Caco-2 (cell line): ENCODE measurements at regions of chr1 and their contacts with region 1.

Region 1: DNA sequence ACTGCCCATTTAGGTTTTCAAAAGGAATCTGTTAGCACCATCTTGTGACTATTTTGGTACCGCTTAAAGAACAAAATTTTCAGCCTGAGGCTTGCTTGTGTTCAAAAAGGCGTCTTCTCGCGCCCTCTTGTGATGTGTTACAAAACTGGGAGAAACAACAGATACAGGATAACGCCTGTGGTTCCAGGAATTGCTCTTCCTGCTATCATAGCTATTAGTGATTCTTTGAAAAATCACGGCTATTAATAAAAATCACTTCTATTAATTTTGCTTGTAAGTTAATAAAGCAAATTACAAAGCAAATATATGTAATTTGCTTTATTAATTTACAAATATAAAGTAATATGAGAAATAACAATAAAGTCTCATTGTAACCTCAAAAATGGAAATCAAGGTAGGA is 82.2 kb upstream of the ABCD3 start:
- DNase-seq: peak; percentile 74 to 79
- H3K4me3 ChIP-seq: no peak overlapping the region
- H3K4me3 Mint-ChIP-seq: no peak overlapping the region
- H3K27ac Mint-ChIP-seq: no peak overlapping the region
- H3K4me1 ChIP-seq: peaks cover 65% of the 10 kb centered on the region
- H3K4me1 Mint-ChIP-seq: peaks cover 25% of the 10 kb centered on the region
- H3K27me3 ChIP-seq: no peaks in the 10 kb centered on the region
- H3K27me3 Mint-ChIP-seq: no peaks in the 10 kb centered on the region
- CTCF ChIP-seq: peak; percentile 57 to 68

Region 2: GRCh38 chr1:94025383-94026340 is 310.3 kb before region 1 on chr1:
- CTCF ChIA-PET with region 1: interaction called, 36 read pairs
- POLR2A ChIA-PET with region 1: no interaction called
- intact Hi-C with region 1: loop called (anchors 1 kb)
- DNase-seq: peak in 1 of 2 experiments; percentile 45
- H3K4me3 ChIP-seq: no peak overlapping the region
- H3K4me3 Mint-ChIP-seq: no peak overlapping the region
- H3K27ac Mint-ChIP-seq: peak overlapping the region; percentile 43
- H3K4me1 ChIP-seq: peaks cover 23% of the 10 kb centered on the region
- H3K4me1 Mint-ChIP-seq: peaks cover 22% of the 10 kb centered on the region
- H3K27me3 ChIP-seq: no peaks in the 10 kb centered on the region
- H3K27me3 Mint-ChIP-seq: no peaks in the 10 kb centered on the region
- CTCF ChIP-seq: peak; percentile 43 to 51

Region 3: DNA sequence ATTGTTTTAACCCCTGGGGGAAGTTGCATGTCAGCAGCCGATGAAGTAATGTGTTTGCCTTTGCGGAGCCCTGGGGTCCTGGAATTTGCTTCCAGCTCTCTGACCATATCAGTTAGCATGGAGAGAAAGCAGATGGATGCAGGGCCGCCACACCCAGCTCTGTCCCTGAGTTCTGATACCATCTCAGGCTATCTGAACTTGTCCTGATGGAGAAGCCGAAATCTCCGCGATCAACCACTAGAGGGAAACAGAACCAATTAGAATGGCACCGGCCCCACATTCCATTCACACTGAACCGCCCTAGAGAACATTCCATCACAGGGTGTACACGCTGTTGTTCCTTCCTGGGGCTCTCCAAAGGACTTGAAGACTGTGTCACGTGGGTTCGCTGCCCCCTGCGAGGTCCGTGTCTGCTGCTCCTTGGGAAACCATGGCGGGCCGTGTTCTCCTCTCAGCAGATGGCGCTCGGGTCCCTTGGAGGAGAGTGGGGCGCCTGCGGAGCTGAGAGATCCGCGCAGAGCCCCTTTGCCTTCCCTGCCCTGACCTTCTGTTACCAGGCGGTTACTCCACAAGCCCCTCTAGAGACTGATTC is 290.4 kb before region 1 on chr1:
- CTCF ChIA-PET with region 1: interaction called, 49 read pairs
- POLR2A ChIA-PET with region 1: no interaction called
- intact Hi-C with region 1: loop called (anchors 1 kb)
- DNase-seq: peak; percentile 91 to 95
- H3K4me3 ChIP-seq: peak overlapping the region; percentile 12
- H3K4me3 Mint-ChIP-seq: peak overlapping the region; percentile 24
- H3K27ac Mint-ChIP-seq: peak overlapping the region; percentile 68
- H3K4me1 ChIP-seq: peaks cover 9% of the 10 kb centered on the region; the same call in 1 of the 2 replicates
- H3K4me1 Mint-ChIP-seq: peaks cover 7% of the 10 kb centered on the region
- H3K27me3 ChIP-seq: no peaks in the 10 kb centered on the region
- H3K27me3 Mint-ChIP-seq: no peaks in the 10 kb centered on the region
- CTCF ChIP-seq: peak; percentile 40 to 73

Region 4: GRCh38 chr1:94125551-94126514 is 210.1 kb before region 1 on chr1:
- CTCF ChIA-PET with region 1: interaction called, 3 read pairs
- POLR2A ChIA-PET with region 1: no interaction called
- intact Hi-C with region 1: loop called (anchors 5 kb)
- DNase-seq: peak; percentile 74 to 83
- H3K4me3 ChIP-seq: no peak overlapping the region
- H3K4me3 Mint-ChIP-seq: peak overlapping the region; percentile 58
- H3K27ac Mint-ChIP-seq: peak overlapping the region; percentile 70
- H3K4me1 ChIP-seq: peaks cover 24% of the 10 kb centered on the region
- H3K4me1 Mint-ChIP-seq: peaks cover 11% of the 10 kb centered on the region
- H3K27me3 ChIP-seq: no peaks in the 10 kb centered on the region
- H3K27me3 Mint-ChIP-seq: no peaks in the 10 kb centered on the region
- CTCF ChIP-seq: peak; percentile 13 to 16

Region 5: DNA sequence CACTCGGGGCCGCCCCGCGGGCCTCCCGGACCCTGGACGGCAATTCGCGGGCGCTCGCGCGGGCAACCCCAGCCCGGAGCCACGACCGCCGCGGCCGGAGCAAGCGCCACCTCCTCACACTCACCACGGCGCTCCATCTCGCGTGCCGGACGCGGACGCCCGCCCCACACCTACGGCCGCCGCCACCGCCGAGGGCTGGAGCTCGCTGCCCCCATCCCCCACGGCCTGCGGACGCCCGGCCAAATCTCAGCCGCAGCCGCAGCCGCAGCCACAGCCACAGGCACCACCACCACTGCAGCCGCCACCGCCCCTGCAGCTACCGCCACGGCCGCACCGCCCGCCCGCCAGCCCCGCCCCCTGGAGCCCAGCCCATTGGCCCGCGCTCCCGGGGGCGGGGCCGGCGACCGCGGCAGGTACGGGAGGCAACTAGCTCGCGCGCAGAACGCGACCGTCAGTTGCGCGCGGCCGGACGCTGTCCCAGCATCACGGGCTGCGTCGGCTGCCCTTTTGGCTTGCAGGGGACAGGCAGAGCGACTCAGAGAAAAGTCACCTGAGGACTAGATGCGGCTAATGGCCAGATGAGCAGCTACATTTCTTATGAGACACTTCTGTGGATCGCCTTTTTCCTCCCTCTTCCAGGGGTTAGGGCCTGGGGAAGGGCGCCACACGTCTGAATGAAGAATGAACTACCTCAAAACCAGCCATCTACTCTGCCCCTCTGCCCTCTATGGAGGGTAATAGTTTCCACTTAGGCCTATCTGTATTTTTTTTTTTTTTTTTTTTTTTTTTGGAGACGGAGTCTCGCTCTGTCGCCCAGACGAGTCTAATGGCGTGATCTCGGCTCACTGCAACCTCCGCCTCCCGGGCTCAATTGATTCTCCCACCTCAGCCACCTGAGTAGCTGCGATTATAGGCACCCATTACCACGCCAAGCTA is 98.4 kb before region 1 on chr1 and contains the start of gene ARHGAP29:
- CTCF ChIA-PET with region 1: interaction called, 6 read pairs
- POLR2A ChIA-PET with region 1: interaction called, 3 read pairs
- intact Hi-C with region 1: loop called (anchors 2 kb)
- DNase-seq: peak; percentile 88 to 92
- H3K4me3 ChIP-seq: peak within 1 kb of the TSS; percentile 81
- H3K4me3 Mint-ChIP-seq: peak within 1 kb of the TSS; percentile 88
- H3K27ac Mint-ChIP-seq: peak within 1 kb of the TSS; percentile 85
- H3K4me1 ChIP-seq: peaks cover 48% of the 10 kb centered on the region
- H3K4me1 Mint-ChIP-seq: peaks cover 41% of the 10 kb centered on the region
- H3K27me3 ChIP-seq: no peaks in the 10 kb centered on the region
- H3K27me3 Mint-ChIP-seq: no peaks in the 10 kb centered on the region
- CTCF ChIP-seq: no peak
- total RNA-seq, gene ARHGAP29: 30.3 and 31.4 TPM in 2 replicates

Region 6: DNA sequence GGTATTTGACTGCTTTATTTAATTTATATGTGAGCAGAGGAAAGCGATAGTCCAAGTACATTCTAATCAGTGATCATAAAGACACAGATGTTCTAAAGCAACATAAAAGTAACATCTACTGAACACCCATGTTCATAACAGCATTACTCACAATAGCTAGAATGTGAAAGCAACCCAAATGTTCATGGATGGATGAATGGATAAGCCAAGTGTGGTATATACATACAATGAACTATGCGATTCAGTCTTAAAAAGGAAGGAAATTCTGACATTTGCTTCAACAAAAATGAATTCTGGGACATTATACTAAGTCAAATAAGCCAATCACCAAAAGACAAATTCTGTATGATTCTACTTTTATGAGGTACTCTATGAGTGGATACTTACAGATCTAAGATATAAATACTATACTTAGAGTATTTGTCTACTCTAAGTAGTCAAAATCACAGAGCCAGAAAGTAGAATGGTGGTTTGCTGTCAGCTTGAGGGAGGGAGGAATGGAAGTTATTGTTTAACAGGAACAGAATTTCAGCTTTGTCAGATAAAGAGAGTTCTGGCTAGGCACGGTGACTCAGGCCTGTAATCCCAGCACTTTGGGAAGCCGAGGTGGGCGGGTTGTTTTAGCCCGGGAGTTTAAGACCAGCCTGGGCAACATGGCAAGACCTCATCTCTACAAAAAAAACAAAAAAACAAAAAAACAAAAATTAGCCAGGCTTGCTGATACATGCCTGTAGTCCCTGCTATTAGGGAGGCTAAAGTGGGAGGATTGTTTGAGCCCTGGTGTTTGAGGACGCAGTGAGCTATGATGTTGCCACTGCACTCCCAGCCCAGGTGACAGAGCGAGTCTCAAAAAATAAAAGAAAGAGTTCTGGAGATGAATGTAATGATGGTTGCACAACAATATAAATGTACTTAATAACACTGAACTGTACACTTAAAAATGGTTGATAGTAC is 18.8 kb before region 1 on chr1:
- CTCF ChIA-PET with region 1: interaction called, 11 read pairs
- POLR2A ChIA-PET with region 1: no interaction called
- intact Hi-C with region 1: no loop called
- DNase-seq: peak; percentile 56 to 68
- H3K4me3 ChIP-seq: no peak overlapping the region
- H3K4me3 Mint-ChIP-seq: peak overlapping the region; percentile 70
- H3K27ac Mint-ChIP-seq: peak overlapping the region; percentile 90
- H3K4me1 ChIP-seq: peaks cover 79% of the 10 kb centered on the region
- H3K4me1 Mint-ChIP-seq: peaks cover 37% of the 10 kb centered on the region
- H3K27me3 ChIP-seq: no peaks in the 10 kb centered on the region
- H3K27me3 Mint-ChIP-seq: no peaks in the 10 kb centered on the region
- CTCF ChIP-seq: no peak

Region 7: GRCh38 chr1:94411237-94411636 is 75.3 kb after region 1 on chr1:
- CTCF ChIA-PET with region 1: no interaction called
- POLR2A ChIA-PET with region 1: no interaction called
- intact Hi-C with region 1: no loop called
- DNase-seq: no peak
- H3K4me3 ChIP-seq: no peak overlapping the region
- H3K4me3 Mint-ChIP-seq: no peak overlapping the region
- H3K27ac Mint-ChIP-seq: no peak overlapping the region
- H3K4me1 ChIP-seq: 0 out of 2 replicates have a peak, but pooled peaks cover 5% of the 10 kb centered on the region
- H3K4me1 Mint-ChIP-seq: peaks cover 8% of the 10 kb centered on the region
- H3K27me3 ChIP-seq: no peaks in the 10 kb centered on the region
- H3K27me3 Mint-ChIP-seq: no peaks in the 10 kb centered on the region
- CTCF ChIP-seq: no peak

Region 8: GRCh38 chr1:94425821-94426484 is 90.0 kb after region 1 on chr1:
- CTCF ChIA-PET with region 1: no interaction called
- POLR2A ChIA-PET with region 1: no interaction called
- intact Hi-C with region 1: no loop called
- DNase-seq: no peak
- H3K4me3 ChIP-seq: peak overlapping the region; percentile 10; the same call in 1 of the 2 replicates
- H3K4me3 Mint-ChIP-seq: peak overlapping the region; percentile 59
- H3K27ac Mint-ChIP-seq: no peak overlapping the region
- H3K4me1 ChIP-seq: peaks cover 41% of the 10 kb centered on the region
- H3K4me1 Mint-ChIP-seq: peaks cover 25% of the 10 kb centered on the region
- H3K27me3 ChIP-seq: no peaks in the 10 kb centered on the region
- H3K27me3 Mint-ChIP-seq: no peaks in the 10 kb centered on the region
- CTCF ChIP-seq: no peak

Region 9: DNA sequence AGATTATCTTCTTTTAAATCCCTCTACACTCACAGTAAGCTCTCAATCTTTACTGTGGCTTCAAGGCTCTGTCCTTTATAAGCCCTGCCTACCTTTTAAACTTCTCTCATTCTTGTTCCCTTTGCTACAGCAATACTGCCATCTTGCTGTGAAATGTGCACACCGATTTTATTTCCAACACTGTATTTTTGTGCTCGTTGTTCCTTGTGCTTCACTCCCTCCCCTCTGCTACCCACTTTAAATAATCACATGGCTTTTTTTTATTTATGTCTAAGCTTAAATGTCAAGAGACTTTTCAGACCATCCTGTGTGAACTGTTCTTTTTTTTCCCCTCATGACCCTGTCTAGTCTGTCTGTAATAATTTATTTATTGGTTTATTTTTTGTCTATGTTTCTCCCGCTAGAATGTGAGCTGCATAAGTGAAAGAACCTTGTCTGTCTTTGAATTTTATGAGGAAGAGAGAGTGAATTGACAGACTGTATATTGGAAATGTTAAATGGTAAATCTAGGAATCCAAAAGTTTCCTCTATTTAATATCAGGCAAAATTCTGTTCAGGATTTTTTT is 127.9 kb after region 1 on chr1:
- CTCF ChIA-PET with region 1: interaction called, 38 read pairs
- POLR2A ChIA-PET with region 1: interaction called, 3 read pairs
- intact Hi-C with region 1: loop called (anchors 1 kb)
- DNase-seq: peak; percentile 39 to 56
- H3K4me3 ChIP-seq: no peak overlapping the region
- H3K4me3 Mint-ChIP-seq: peak overlapping the region; percentile 46
- H3K27ac Mint-ChIP-seq: peak overlapping the region; percentile 82
- H3K4me1 ChIP-seq: peaks cover 40% of the 10 kb centered on the region
- H3K4me1 Mint-ChIP-seq: peaks cover 29% of the 10 kb centered on the region
- H3K27me3 ChIP-seq: no peaks in the 10 kb centered on the region
- H3K27me3 Mint-ChIP-seq: no peaks in the 10 kb centered on the region
- CTCF ChIP-seq: peak; percentile 41 to 49

Region 10: GRCh38 chr1:94496076-94496755 is 160.3 kb after region 1 on chr1:
- CTCF ChIA-PET with region 1: no interaction called
- POLR2A ChIA-PET with region 1: no interaction called
- intact Hi-C with region 1: no loop called
- DNase-seq: no peak
- H3K4me3 ChIP-seq: no peak overlapping the region
- H3K4me3 Mint-ChIP-seq: no peak overlapping the region
- H3K27ac Mint-ChIP-seq: no peak overlapping the region
- H3K4me1 ChIP-seq: no peaks in the 10 kb centered on the region
- H3K4me1 Mint-ChIP-seq: peaks cover 8% of the 10 kb centered on the region
- H3K27me3 ChIP-seq: no peaks in the 10 kb centered on the region
- H3K27me3 Mint-ChIP-seq: no peaks in the 10 kb centered on the region
- CTCF ChIP-seq: no peak